Motor neuron (in vitro differentiated cells): ENCODE measurements at regions of chr9 and their contacts with region 1.

Region 1: DNA sequence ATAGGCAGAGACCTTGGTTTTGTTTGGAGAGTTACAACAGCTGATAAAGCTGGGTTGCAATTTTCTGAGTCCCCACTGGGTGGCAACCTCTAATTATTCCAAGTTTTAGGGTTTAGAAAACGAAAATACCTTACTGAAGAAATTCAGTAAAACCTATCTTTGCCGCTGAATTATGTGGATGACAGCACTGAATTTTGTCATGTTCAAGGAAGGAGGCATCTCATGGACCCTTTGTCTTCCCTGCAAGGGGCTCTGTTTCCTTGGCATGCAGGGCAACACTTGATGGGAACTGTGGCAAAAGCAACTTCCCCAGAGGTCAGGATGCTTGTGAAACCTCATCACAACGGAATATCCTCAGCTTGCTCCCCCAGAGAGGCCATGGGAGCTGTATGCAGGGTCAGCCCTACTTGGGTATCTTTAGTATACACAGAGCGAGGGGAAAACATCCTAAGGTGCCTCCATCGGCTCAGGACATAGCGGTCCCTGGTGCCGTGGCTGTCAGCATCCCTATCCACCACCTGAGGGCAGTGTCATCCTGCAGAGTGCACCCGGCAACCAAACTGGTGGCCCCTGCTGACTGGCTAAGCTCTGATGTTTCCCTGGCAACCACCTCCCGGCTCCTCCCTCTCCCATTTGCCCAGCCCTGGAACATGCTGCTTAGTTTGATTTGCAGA is 123.1 kb downstream of the RXRA start:
- ATAC-seq: peak; percentile 97 to 99 (median 98)
- H3K4me3 ChIP-seq: no peak overlapping the region
- H3K27ac ChIP-seq: no peak overlapping the region
- H3K4me1 ChIP-seq: peaks cover 9 to 12% of the 10 kb centered on the region in 2 donors

Region 2: DNA sequence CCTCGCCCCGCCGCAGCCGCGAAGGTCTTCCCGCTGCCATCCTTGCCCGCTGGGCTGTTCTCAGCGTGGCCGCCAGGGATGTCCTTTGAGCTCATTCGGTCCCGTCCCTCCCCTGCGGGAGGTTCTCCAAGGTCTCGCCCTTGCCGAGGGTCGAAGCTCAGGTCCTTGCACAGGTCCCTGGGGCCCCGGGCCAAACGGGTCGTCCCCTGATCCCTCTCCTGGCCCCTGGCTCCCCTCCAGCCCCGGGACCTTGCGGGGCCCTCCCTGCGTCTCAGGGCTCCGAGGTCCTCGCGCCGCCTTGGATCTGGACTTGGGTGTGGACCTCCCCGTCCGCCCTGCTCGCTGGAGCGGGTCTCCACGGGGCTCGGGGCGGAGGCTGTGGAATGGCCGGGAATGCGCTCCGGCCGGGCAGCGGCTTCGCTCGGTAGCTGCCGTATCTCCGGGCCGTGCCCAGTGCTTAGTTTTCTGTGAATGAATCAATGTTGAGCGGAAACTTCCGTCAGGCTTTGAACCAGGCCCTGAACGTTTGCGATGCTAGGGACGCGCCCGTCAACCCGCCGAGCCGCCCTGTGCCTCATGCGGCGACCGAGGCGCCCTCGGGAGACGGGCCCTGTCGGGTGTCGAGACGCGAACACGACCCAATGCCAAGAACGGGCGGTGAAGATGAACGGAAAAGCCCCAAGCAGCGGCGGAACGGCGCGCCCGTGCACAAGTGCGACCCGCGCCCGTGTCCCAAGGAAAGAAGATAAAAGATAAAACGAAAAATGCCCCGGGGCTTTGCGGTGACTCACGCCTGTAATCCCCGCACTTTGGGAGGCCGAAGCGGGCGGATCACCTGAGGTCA is 285.8 kb before region 1 on chr9:
- in situ Hi-C with region 1: loop called in 8 of 9 experiments (anchors 5 to 25 kb)
- ATAC-seq: no peak
- H3K4me3 ChIP-seq: no peak overlapping the region
- H3K27ac ChIP-seq: no peak overlapping the region
- H3K4me1 ChIP-seq: peaks cover 6 to 8% of the 10 kb centered on the region in 2 donors

Region 3: GRCh38 chr9:134607971-134608370 is 158.6 kb after region 1 on chr9:
- in situ Hi-C with region 1: no loop called
- ATAC-seq: no peak
- H3K4me3 ChIP-seq: no peak overlapping the region
- H3K27ac ChIP-seq: no peak overlapping the region
- H3K4me1 ChIP-seq: peaks cover 0 to under 1% of the 10 kb centered on the region in 2 donors